Activated CD8-positive, alpha-beta memory T cell treated with anti-CD3 and anti-CD28 coated beads, Interleukin-2, amount 10 ng/mL, durations not matched to agents 7 days and 5 days (primary cell): ENCODE measurements at regions of chr14 and their contacts with region 1.

Region 1: DNA sequence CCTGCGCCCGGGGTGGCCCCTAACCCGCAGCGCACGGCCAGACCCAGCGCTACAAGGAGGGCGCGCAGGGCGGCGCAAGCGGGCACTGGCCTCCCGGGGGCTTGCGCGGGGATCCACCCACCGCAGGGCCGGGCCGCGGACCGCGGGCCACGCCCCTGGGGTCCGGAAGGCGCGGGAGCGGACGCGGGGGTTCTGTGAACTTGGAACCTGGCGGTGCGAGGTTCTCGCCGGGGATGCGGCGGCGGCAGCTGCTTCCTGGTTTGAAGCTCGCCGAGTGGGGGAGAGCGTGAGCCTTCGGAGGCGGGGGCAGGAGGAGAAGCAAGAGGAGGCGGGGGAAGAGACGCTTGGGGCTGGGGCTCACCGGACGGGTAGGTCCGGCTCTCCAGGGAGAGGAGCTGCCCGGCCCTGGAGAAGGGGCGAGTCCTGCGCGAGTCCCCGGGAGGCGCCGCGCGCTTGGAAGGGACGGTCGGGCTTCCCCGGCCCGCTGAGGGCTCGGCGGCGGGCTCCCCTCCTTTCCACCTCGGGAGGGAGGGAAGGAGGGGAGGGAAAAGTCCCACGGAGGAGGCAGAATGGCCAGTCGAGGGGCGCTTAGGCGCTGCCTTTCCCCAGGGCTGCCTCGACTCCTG is at the start of gene PRKCH:
- DNase-seq: peak; percentile 94
- ATAC-seq: peak; percentile 78
- H3K4me3 Mint-ChIP-seq: peak within 1 kb of the TSS; percentile 97
- H3K27ac Mint-ChIP-seq: peak within 1 kb of the TSS; percentile 91
- H3K4me1 Mint-ChIP-seq: peaks cover 26% of the 10 kb centered on the region
- H3K27me3 Mint-ChIP-seq: no peaks in the 10 kb centered on the region
- total RNA-seq, gene PRKCH: 304 to 312 TPM

Region 2: GRCh38 chr14:61334197-61334701 is 12.8 kb after region 1 on chr14:
- CTCF ChIA-PET with region 1: interaction called, 24 read pairs
- DNase-seq: no peak
- ATAC-seq: peak; percentile 9
- H3K4me3 Mint-ChIP-seq: peak overlapping the region; percentile 81
- H3K27ac Mint-ChIP-seq: peak overlapping the region; percentile 99
- H3K4me1 Mint-ChIP-seq: peaks cover 86% of the 10 kb centered on the region
- H3K27me3 Mint-ChIP-seq: no peaks in the 10 kb centered on the region

Region 3: GRCh38 chr14:61342486-61342885 is 21.0 kb after region 1 on chr14:
- CTCF ChIA-PET with region 1: interaction called, 18 read pairs
- DNase-seq: peak; percentile 95
- ATAC-seq: peak; percentile 59
- H3K4me3 Mint-ChIP-seq: peak overlapping the region; percentile 78
- H3K27ac Mint-ChIP-seq: peak overlapping the region; percentile 90
- H3K4me1 Mint-ChIP-seq: peaks cover 96% of the 10 kb centered on the region
- H3K27me3 Mint-ChIP-seq: no peaks in the 10 kb centered on the region